OCI-LY7 (cell line): ENCODE measurements at regions of chr7 and their contacts with region 1.

Region 1: GRCh38 chr7:30564243-30564892 is 30.3 kb upstream of the GARS1 start:
- DNase-seq: peak; percentile 86
- H3K4me3 ChIP-seq: no peak overlapping the region
- H3K27ac ChIP-seq: no peak overlapping the region
- H3K4me1 ChIP-seq: no peaks in the 10 kb centered on the region
- CTCF ChIP-seq: peak; percentile 91

Region 2: GRCh38 chr7:30164567-30164966 is 399.8 kb before region 1 on chr7:
- CTCF ChIA-PET with region 1: interaction called, 4 read pairs
- POLR2A ChIA-PET with region 1: no interaction called
- intact Hi-C with region 1: loop called (anchors 1 kb)
- DNase-seq: peak; percentile 75
- H3K4me3 ChIP-seq: no peak overlapping the region
- H3K27ac ChIP-seq: no peak overlapping the region
- H3K4me1 ChIP-seq: peaks cover 37% of the 10 kb centered on the region
- CTCF ChIP-seq: peak; percentile 92

Region 3: DNA sequence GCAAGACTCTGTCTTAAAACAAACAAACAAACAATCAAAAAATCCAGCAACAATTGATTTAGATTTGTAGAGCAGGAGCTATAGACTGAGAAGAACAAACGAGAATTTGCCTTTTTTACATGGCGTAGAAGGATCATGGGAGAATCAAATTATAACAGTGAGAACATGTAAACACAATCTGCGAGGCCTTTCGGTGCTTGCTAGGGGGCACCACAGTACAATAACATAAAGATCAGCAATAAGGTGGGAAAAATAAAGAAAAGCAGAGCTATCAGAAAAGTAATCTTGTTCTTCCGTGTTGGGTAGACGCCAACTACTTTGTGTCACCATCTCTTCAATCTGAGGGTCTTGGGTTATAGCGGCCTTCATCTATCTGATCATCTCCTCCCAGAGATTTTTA is 168.0 kb before region 1 on chr7:
- CTCF ChIA-PET with region 1: no interaction called
- POLR2A ChIA-PET with region 1: no interaction called
- intact Hi-C with region 1: loop called (anchors 1 kb)
- DNase-seq: peak; percentile 54
- H3K4me3 ChIP-seq: no peak overlapping the region
- H3K27ac ChIP-seq: no peak overlapping the region
- H3K4me1 ChIP-seq: peaks cover 3% of the 10 kb centered on the region
- CTCF ChIP-seq: peak; percentile 78

Region 4: DNA sequence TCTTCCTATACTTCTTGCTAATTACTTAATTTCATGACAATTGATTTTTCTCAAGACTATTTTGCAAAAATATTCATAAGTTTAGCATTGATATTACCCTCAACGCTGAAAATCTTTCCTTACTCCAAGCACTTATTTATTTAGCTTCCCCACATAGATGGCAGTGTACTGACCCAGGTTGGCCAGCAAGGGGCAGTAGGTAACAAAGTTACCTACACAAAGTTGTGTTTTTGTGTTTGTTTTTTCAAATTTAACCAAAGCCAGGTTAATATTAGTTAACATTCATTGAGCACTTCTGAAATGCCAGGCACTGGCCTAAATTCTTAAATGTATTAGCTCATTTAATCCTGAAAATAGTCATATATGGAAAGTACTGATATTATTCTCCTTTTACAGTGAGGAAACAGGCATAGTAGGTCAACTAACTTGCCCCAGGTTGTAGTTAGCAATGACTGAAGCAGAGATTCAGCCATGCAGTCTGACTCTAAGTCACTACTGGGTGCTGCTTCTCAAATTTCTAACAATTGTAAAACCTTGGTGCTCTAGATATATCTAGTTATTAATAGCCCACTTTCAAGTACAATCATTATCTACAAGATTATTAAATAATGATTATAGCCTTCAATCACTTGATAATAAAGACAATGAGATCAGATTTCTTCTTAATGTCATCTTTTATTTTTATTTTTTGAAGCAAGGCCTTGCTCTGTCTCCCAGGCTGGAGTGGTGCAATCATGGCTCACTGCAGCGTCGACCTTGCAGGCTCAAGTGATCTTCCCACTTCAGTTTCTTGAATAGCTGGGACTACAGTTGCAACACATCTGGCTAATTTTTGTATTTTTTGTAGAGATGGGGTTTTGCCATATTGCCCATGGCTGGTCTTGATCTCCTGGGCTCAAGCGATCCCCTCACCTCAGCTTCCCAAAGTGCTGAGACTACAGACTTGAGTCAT is 54.0 kb before region 1 on chr7:
- CTCF ChIA-PET with region 1: interaction called, 7 read pairs
- POLR2A ChIA-PET with region 1: interaction called, 4 read pairs
- intact Hi-C with region 1: loop called (anchors 1 kb)
- DNase-seq: peak; percentile 57
- H3K4me3 ChIP-seq: no peak overlapping the region
- H3K27ac ChIP-seq: no peak overlapping the region
- H3K4me1 ChIP-seq: peaks cover under 1% of the 10 kb centered on the region
- CTCF ChIP-seq: peak; percentile 99